ENCODE measurements at regions of chr7 and their contacts with region 1.

Region 1: DNA sequence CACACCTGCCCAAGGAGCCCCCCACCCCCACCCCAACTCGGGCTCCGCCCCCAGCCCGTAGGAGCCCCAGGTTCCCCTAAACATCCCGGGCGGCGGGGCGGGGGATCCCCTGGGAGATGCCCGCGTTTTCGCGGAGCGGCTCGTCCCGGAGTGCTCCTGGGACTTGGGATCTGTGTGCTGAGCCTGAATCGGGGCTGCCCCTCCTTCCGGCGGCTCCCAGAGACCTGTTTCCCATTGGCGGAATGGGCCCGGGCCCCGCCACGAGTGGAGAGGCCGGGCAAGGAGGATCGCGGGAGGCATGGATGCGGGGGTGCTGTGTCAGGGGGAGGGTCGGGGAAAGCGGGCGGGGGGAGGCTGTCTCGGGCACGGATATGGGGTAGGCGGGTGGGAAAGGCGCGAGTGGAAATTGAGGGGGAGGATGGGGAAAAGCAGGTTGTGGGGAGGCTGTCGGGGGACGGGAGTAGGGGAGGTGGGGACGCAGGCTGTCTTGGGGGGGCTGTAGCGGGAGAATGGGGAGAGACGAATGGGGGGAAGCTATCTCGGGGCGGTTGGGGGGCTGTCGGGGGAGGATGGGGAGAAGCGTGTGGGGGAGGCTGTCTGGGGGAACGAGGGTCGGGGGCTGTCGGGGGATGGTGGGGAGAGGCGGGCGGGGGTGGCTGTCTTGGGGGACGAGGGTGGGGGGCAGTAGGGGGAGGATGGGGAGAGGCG is 572 bp upstream of the BHLHA15 start:
- DNase-seq: no peak
- ATAC-seq: peak; percentile 42; the same call in 1 of the 2 replicates
- H3K4me3 ChIP-seq: peak overlapping the region; percentile 18; the same call in 1 of the 2 replicates
- H3K27ac ChIP-seq: no peak overlapping the region
- H3K4me1 ChIP-seq: no peaks in the 10 kb centered on the region
- H3K27me3 ChIP-seq: no peaks in the 10 kb centered on the region
- CTCF ChIP-seq: no peak
- POLR2A ChIP-seq: no peak
- RAD21 ChIP-seq: no peak

Region 2: GRCh38 chr7:97868788-97869187 is 341.9 kb before region 1 on chr7:
- CTCF ChIA-PET with region 1: no interaction called
- POLR2A ChIA-PET with region 1: no interaction called
- dilution Hi-C with region 1: no loop called
- in situ Hi-C with region 1: no loop called
- intact Hi-C with region 1: no loop called
- DNase-seq: no peak
- ATAC-seq: no peak
- H3K4me3 ChIP-seq: no peak overlapping the region
- H3K27ac ChIP-seq: no peak overlapping the region
- H3K4me1 ChIP-seq: no peaks in the 10 kb centered on the region
- H3K27me3 ChIP-seq: no peaks in the 10 kb centered on the region
- CTCF ChIP-seq: no peak
- POLR2A ChIP-seq: no peak
- RAD21 ChIP-seq: no peak

Region 3: DNA sequence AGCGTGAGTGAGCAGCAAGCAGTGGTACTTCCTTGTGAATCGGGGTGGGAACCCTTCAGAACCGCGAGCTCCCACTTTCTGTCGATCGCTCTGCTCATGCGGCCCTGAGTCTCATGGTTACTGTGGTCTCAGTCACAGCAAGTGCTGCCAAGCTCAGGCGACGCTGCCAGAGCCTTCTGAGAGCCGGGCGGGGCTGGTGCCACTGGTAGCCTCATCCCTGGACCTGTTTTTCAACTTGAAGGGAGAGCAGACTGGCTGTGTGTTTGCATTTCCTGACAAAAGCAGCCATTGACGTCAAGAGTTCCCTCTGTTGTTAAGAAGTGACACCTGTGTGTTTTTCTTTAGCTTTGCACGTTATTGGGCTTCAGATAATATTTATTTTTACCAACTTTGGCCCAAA is 32.3 kb before region 1 on chr7:
- CTCF ChIA-PET with region 1: no interaction called
- POLR2A ChIA-PET with region 1: no interaction called
- dilution Hi-C with region 1: no loop called
- in situ Hi-C with region 1: no loop called
- intact Hi-C with region 1: loop called (anchors 1 kb)
- DNase-seq: no peak
- ATAC-seq: no peak
- H3K4me3 ChIP-seq: no peak overlapping the region
- H3K27ac ChIP-seq: no peak overlapping the region
- H3K4me1 ChIP-seq: no peaks in the 10 kb centered on the region; the same call in 1 of the 2 replicates
- H3K27me3 ChIP-seq: no peaks in the 10 kb centered on the region
- CTCF ChIP-seq: no peak
- POLR2A ChIP-seq: no peak
- RAD21 ChIP-seq: no peak

Region 4: GRCh38 chr7:98795741-98796493 is 585.2 kb after region 1 on chr7:
- CTCF ChIA-PET with region 1: no interaction called
- POLR2A ChIA-PET with region 1: no interaction called
- dilution Hi-C with region 1: no loop called
- in situ Hi-C with region 1: no loop called
- intact Hi-C with region 1: no loop called
- DNase-seq: no peak
- ATAC-seq: no peak
- H3K4me3 ChIP-seq: no peak overlapping the region
- H3K27ac ChIP-seq: no peak overlapping the region
- H3K4me1 ChIP-seq: no peaks in the 10 kb centered on the region
- H3K27me3 ChIP-seq: no peaks in the 10 kb centered on the region
- CTCF ChIP-seq: no peak
- POLR2A ChIP-seq: no peak
- RAD21 ChIP-seq: no peak

Measured in IMR-90 (cell line).